T-cell (primary cell): ENCODE measurements at regions of chr19 and their contacts with region 1.

Region 1: GRCh38 chr19:39970675-39971379 is at the start of gene PSMC4:
- DNase-seq: peak; percentile 96 to 99 (median 98)
- ATAC-seq: peak; percentile 95 to 98 (median 96)
- H3K4me3 ChIP-seq: peak within 1 kb of the TSS; percentile 84 to 99
- H3K4me3 Mint-ChIP-seq: peak within 1 kb of the TSS; percentile 98 to 100 (median 98)
- H3K27ac ChIP-seq: peak within 1 kb of the TSS; percentile 90
- H3K27ac Mint-ChIP-seq: peak within 1 kb of the TSS; percentile 95 to 98
- H3K4me1 ChIP-seq: peaks cover 11 to 50% of the 10 kb centered on the region in 2 experiments
- H3K4me1 Mint-ChIP-seq: peaks cover 53 to 62% (median 59%) of the 10 kb centered on the region in 3 donors
- H3K27me3 ChIP-seq: no peaks in the 10 kb centered on the region
- H3K27me3 Mint-ChIP-seq: no peaks in the 10 kb centered on the region
- total RNA-seq, gene PSMC4: 58.5 to 80.0 (median 59.6) TPM

Region 2: GRCh38 chr19:39792999-39793546 is 177.8 kb before region 1 on chr19:
- CTCF ChIA-PET with region 1: interaction called in 1 of 2 experiments, 16 read pairs
- POLR2A ChIA-PET with region 1: no interaction called
- DNase-seq: peak; percentile 20 to 82 (median 64)
- ATAC-seq: peak; percentile 91 to 97 (median 93)
- H3K4me3 ChIP-seq: peak overlapping the region; percentile 55 to 66
- H3K4me3 Mint-ChIP-seq: peak overlapping the region; percentile 63 to 74 (median 66)
- H3K27ac ChIP-seq: no peak overlapping the region
- H3K27ac Mint-ChIP-seq: no peak overlapping the region
- H3K4me1 ChIP-seq: peaks cover 0 to 10% of the 10 kb centered on the region in 2 experiments
- H3K4me1 Mint-ChIP-seq: peaks cover 0 to 4% (median 0%) of the 10 kb centered on the region in 3 donors
- H3K27me3 ChIP-seq: no peaks in the 10 kb centered on the region
- H3K27me3 Mint-ChIP-seq: peaks cover 2 to 3% of the 10 kb centered on the region in 2 donors

Region 3: DNA sequence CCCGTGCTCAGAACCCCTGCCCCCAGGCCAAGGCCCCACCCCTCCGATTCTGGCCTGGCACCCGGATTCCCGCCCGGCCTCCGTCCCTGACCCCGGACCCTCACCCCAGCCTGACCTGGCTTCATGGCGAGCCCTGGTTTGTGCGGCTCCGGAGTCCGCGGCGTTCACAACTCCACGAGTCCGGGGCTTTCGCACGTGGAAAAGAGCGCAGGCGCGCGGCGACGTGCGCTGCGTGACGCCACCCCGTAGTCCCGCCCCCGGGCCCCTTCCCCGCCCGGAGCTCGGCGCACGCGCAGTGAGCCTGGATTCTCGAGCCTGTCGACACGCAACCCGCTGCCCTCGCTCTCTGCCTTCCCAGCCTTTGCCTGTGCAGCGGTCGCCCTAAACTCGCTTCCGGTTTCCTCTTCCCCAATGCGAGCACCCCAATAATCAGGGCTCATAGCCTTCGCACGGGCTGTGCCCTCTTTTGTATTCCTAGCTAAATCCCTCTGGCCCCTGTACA is 124.6 kb before region 1 on chr19 and contains the start of gene FBL:
- CTCF ChIA-PET with region 1: interaction called in 1 of 2 experiments, 16 read pairs
- POLR2A ChIA-PET with region 1: interaction called in 1 of 2 experiments, 5 read pairs
- DNase-seq: peak; percentile 90 to 99 (median 96)
- ATAC-seq: peak; percentile 92 to 94 (median 94)
- H3K4me3 ChIP-seq: peak within 1 kb of the TSS; percentile 85 to 92
- H3K4me3 Mint-ChIP-seq: peak within 1 kb of the TSS; percentile 83 to 87 (median 87)
- H3K27ac ChIP-seq: peak within 1 kb of the TSS; percentile 92
- H3K27ac Mint-ChIP-seq: peak within 1 kb of the TSS; percentile 91 to 95
- H3K4me1 ChIP-seq: peaks cover 7 to 44% of the 10 kb centered on the region in 2 experiments
- H3K4me1 Mint-ChIP-seq: peaks cover 50 to 54% (median 53%) of the 10 kb centered on the region in 3 donors
- H3K27me3 ChIP-seq: no peaks in the 10 kb centered on the region
- H3K27me3 Mint-ChIP-seq: no peaks in the 10 kb centered on the region
- total RNA-seq, gene FBL: 291 to 348 (median 299) TPM

Region 4: DNA sequence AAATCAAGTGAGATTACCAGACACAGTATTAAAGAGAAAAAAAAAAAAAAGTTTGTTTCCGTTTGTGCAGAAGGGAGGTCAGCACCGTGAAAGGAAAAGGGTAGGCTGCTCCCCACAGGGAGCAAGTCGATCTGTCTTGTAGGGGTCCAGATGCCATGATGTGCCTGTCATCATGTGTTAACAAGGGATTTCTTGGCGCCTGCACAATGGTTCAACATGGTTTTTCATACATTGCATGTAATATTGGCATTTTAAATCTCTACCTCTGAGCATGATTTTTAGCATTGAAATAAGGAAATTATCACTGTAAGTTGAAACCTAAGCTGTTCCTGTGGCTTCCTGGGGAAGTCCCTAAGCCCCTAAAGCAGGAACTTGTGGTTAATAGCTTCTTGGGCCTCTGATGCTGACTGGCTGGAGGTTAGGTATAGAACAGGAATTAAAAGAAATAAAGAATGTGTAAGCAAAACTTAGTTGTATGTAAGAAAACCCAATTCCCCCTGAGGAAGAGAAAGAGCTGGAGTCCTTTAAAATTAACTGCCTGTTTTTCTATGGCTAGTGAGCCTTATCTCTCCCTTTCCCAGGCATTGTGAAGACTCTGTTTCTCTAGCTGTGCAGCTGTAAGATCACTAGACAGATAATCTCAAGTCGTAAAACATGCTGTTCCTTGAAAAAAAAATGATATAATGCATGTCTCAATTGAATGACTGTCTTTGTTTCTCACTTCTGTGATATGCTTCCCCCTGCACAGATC is 29.0 kb before region 1 on chr19:
- CTCF ChIA-PET with region 1: interaction called, 7 to 61 read pairs
- POLR2A ChIA-PET with region 1: interaction called, 7 to 11 read pairs
- DNase-seq: peak; percentile 19 to 86 (median 56)
- ATAC-seq: peak; percentile 81 to 90 (median 84)
- H3K4me3 ChIP-seq: peak overlapping the region; percentile 37 to 46
- H3K4me3 Mint-ChIP-seq: peak overlapping the region; percentile 55 to 71 (median 69)
- H3K27ac ChIP-seq: peak overlapping the region; percentile 94
- H3K27ac Mint-ChIP-seq: peak overlapping the region; percentile 86 to 91
- H3K4me1 ChIP-seq: peaks cover 44 to 71% of the 10 kb centered on the region in 2 experiments
- H3K4me1 Mint-ChIP-seq: peaks cover 78 to 79% (median 79%) of the 10 kb centered on the region in 3 donors
- H3K27me3 ChIP-seq: no peaks in the 10 kb centered on the region
- H3K27me3 Mint-ChIP-seq: no peaks in the 10 kb centered on the region

Region 5: GRCh38 chr19:39983695-39984305 is 13.0 kb after region 1 on chr19:
- CTCF ChIA-PET with region 1: interaction called in 1 of 2 experiments, 3 read pairs
- POLR2A ChIA-PET with region 1: interaction called in 1 of 2 experiments, 10 read pairs
- DNase-seq: no peak
- ATAC-seq: no peak
- H3K4me3 ChIP-seq: no peak overlapping the region
- H3K4me3 Mint-ChIP-seq: no peak overlapping the region
- H3K27ac ChIP-seq: no peak overlapping the region
- H3K27ac Mint-ChIP-seq: no peak overlapping the region
- H3K4me1 ChIP-seq: no peaks in the 10 kb centered on the region
- H3K4me1 Mint-ChIP-seq: peaks cover 8 to 12% (median 10%) of the 10 kb centered on the region in 3 donors
- H3K27me3 ChIP-seq: no peaks in the 10 kb centered on the region
- H3K27me3 Mint-ChIP-seq: no peaks in the 10 kb centered on the region

Region 6: GRCh38 chr19:40358773-40359172 is 387.9 kb after region 1 on chr19:
- CTCF ChIA-PET with region 1: interaction called in 1 of 2 experiments, 11 read pairs
- POLR2A ChIA-PET with region 1: no interaction called
- DNase-seq: peak in 3 of 35 experiments; percentile 10 to 46 (median 11)
- ATAC-seq: no peak
- H3K4me3 ChIP-seq: no peak overlapping the region
- H3K4me3 Mint-ChIP-seq: no peak overlapping the region
- H3K27ac ChIP-seq: no peak overlapping the region
- H3K27ac Mint-ChIP-seq: no peak overlapping the region
- H3K4me1 ChIP-seq: peaks cover 0 to 10% of the 10 kb centered on the region in 2 experiments
- H3K4me1 Mint-ChIP-seq: peaks cover 21 to 26% (median 22%) of the 10 kb centered on the region in 3 donors
- H3K27me3 ChIP-seq: no peaks in the 10 kb centered on the region
- H3K27me3 Mint-ChIP-seq: no peaks in the 10 kb centered on the region